ENCODE measurements at regions of chr4 and their contacts with region 1.

Region 1: DNA sequence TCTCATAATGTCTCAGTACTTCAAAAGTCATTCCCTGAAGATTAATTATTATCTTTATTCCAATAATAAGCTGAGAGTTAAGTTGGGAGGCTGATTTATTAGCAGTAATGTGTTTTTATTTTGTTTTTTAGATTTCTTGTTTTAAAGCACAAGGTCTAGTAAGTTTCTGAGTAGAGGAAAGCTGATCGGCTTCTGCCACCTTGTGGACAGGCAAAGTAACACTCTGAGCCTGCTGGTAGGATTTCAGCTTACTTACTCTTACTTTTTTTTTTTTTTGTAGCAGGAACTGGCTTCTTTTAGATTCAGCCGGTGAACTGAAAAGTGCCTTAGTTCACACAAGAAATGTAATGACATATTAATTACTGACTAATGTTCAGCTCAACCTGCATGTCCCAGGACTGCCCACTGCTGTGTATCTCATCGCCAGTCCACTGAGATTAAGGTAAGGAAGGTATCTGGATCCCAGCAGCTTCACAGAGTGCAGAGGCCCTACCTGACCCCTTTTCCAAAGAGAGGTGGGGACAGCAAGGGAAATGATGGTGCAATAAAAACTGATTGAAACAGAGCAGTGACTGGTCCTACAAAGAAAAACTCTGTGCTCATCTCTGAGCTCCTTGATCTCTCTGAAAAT is 126.5 kb downstream of the ADGRA3 start:
- H3K4me3 Mint-ChIP-seq: no peak overlapping the region
- H3K27ac Mint-ChIP-seq: no peak overlapping the region
- H3K4me1 Mint-ChIP-seq: no peaks in the 10 kb centered on the region
- H3K27me3 Mint-ChIP-seq: no peaks in the 10 kb centered on the region

Region 2: GRCh38 chr4:21790438-21791029 is 598.8 kb before region 1 on chr4:
- intact Hi-C with region 1: loop called (anchors 1 kb)
- H3K4me3 Mint-ChIP-seq: no peak overlapping the region
- H3K27ac Mint-ChIP-seq: no peak overlapping the region
- H3K4me1 Mint-ChIP-seq: no peaks in the 10 kb centered on the region
- H3K27me3 Mint-ChIP-seq: no peaks in the 10 kb centered on the region

Region 3: GRCh38 chr4:22416403-22416802 is 27.0 kb after region 1 on chr4:
- intact Hi-C with region 1: no loop called
- H3K4me3 Mint-ChIP-seq: no peak overlapping the region
- H3K27ac Mint-ChIP-seq: no peak overlapping the region
- H3K4me1 Mint-ChIP-seq: no peaks in the 10 kb centered on the region
- H3K27me3 Mint-ChIP-seq: no peaks in the 10 kb centered on the region

Measured in dendritic cell treated with granulocyte-macrophage colony-stimulating factor and Interleukin-4, amounts not matched to agents 40 ng/mL and 50 ng/mL, for 4 days (primary cell).